Transverse colon (tissue), 4 donors: ENCODE measurements at regions of chr17 and their contacts with region 1.

Region 1: DNA sequence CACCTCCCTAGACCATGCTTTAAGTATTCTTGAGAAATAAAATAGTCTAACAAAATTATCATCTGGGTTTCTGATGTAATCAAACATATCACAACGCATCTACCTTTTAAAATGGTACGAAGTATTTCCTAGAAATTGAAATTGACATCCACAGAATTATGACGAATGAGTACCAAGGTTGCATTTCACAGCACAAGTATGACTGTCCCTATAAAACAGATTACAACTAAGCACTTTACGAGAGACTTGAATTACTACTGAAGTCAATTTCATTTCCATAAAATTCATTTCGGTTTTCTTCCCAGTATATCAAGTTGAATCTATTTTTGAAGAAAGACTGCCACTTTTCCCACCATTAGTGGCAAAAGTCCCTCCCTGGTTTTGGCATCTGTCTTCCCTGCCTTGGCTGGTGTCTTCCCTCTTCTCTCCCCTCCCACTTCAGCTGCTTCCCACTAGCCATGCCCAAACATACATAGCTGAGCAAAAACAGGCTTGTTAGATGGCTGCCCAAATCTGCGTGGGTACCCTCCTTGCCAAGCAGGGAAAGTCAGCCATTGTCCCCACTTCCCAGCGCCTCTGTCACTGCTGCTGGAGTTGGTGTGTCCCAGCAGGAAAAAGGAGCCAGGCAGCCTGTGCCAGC is 29.2 kb downstream of the DNAH9 start:
- DNase-seq: no peak
- H3K4me3 ChIP-seq: no peak overlapping the region
- H3K27ac ChIP-seq: no peak overlapping the region
- H3K4me1 ChIP-seq: peaks cover 0 to 6% (median 1%) of the 10 kb centered on the region in 4 donors
- H3K27me3 ChIP-seq: peaks cover 8% of the 10 kb centered on the region
- CTCF ChIP-seq: no peak
- EP300 ChIP-seq: no peak
- POLR2A ChIP-seq: no peak

Region 2: GRCh38 chr17:11671126-11671525 is 43.7 kb after region 1 on chr17:
- in situ Hi-C with region 1: no loop called
- intact Hi-C with region 1: loop called (anchors 1 kb)
- DNase-seq: no peak
- H3K4me3 ChIP-seq: no peak overlapping the region
- H3K27ac ChIP-seq: no peak overlapping the region
- H3K4me1 ChIP-seq: no peaks in the 10 kb centered on the region
- H3K27me3 ChIP-seq: no peaks in the 10 kb centered on the region
- CTCF ChIP-seq: no peak
- EP300 ChIP-seq: no peak
- POLR2A ChIP-seq: no peak

Region 3: GRCh38 chr17:11768106-11768505 is 140.7 kb after region 1 on chr17:
- in situ Hi-C with region 1: no loop called
- intact Hi-C with region 1: no loop called
- DNase-seq: no peak
- H3K4me3 ChIP-seq: no peak overlapping the region
- H3K27ac ChIP-seq: no peak overlapping the region
- H3K4me1 ChIP-seq: no peaks in the 10 kb centered on the region
- H3K27me3 ChIP-seq: no peaks in the 10 kb centered on the region
- CTCF ChIP-seq: no peak
- EP300 ChIP-seq: no peak
- POLR2A ChIP-seq: no peak